Calu3 (cell line): ENCODE measurements at regions of chr10 and their contacts with region 1.

Region 1: GRCh38 chr10:116287906-116288501 is 15.0 kb upstream of the GFRA1 start:
- DNase-seq: peak; percentile 23
- H3K4me3 Mint-ChIP-seq: no peak overlapping the region
- H3K27ac Mint-ChIP-seq: no peak overlapping the region
- H3K4me1 Mint-ChIP-seq: no peaks in the 10 kb centered on the region
- H3K27me3 Mint-ChIP-seq: peaks cover 45% of the 10 kb centered on the region
- CTCF ChIP-seq: no peak

Region 2: DNA sequence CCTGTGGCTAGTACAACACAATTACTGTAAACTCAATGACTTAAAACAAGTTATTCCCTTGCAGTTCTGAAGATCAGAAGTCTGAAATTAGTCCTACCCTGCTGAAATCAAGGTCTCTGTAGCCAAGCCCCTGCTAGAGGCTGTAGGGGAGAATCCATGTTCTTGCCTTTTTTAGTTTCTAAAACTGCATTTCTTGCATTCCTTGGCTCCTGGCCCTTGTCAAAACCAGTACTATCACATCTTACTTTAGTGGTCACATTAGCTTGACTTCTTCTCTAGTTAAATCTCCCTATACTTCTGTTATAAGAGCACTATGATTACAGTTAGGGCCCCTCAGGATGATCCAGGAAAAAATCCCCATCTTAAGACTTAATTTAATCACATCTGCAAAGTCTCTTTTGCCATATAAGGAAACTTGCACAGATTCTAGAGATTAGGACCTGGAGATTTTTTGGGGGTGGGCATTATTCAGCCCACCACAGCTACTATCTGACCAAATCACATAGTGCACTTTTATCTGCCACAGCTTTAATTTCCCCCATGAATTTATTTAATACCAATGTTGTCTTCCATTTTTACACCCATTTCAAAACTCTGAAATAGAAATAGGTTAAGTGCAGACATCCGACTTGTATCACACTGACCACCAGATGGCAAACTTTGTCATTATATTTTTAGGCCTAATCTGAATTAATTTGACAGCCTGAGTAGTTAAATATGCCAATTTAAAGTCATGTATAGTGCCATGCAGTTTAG is 581.8 kb before region 1 on chr10:
- CTCF ChIA-PET with region 1: no interaction called
- intact Hi-C with region 1: loop called (anchors 1 kb)
- DNase-seq: peak; percentile 2
- H3K4me3 Mint-ChIP-seq: no peak overlapping the region
- H3K27ac Mint-ChIP-seq: no peak overlapping the region
- H3K4me1 Mint-ChIP-seq: no peaks in the 10 kb centered on the region
- H3K27me3 Mint-ChIP-seq: no peaks in the 10 kb centered on the region
- CTCF ChIP-seq: no peak

Region 3: GRCh38 chr10:115801992-115802391 is 486.0 kb before region 1 on chr10:
- CTCF ChIA-PET with region 1: no interaction called
- intact Hi-C with region 1: loop called (anchors 1 kb)
- DNase-seq: no peak
- H3K4me3 Mint-ChIP-seq: no peak overlapping the region
- H3K27ac Mint-ChIP-seq: no peak overlapping the region
- H3K4me1 Mint-ChIP-seq: no peaks in the 10 kb centered on the region
- H3K27me3 Mint-ChIP-seq: no peaks in the 10 kb centered on the region
- CTCF ChIP-seq: no peak

Region 4: DNA sequence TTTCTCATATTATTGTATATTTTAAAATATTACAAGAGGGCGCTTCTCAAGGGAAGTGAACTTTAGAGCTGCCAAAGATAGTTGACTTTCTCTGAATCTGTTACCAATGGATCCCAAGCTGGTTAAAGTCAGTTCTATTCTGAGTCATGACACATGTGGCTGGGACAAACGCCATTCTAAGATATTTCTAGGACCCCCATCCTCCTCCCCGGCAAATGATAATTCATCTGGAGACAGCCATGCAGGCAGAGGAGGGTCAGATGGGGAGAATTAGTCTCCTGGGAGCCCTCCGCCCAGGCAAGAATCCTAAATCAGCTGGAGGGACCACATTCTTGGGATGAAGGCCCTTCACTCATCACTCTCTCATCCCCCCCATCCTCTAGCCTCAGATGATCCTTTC is 202.7 kb before region 1 on chr10:
- CTCF ChIA-PET with region 1: no interaction called
- intact Hi-C with region 1: no loop called
- DNase-seq: no peak
- H3K4me3 Mint-ChIP-seq: no peak overlapping the region
- H3K27ac Mint-ChIP-seq: no peak overlapping the region
- H3K4me1 Mint-ChIP-seq: no peaks in the 10 kb centered on the region
- H3K27me3 Mint-ChIP-seq: peaks cover 8% of the 10 kb centered on the region
- CTCF ChIP-seq: no peak